ENCODE measurements at regions of chr5 and their contacts with region 1.

Region 1: GRCh38 chr5:76771705-76772405 is 47.0 kb upstream of the F2RL1 start:
- DNase-seq: no peak
- ATAC-seq: no peak

Region 2: DNA sequence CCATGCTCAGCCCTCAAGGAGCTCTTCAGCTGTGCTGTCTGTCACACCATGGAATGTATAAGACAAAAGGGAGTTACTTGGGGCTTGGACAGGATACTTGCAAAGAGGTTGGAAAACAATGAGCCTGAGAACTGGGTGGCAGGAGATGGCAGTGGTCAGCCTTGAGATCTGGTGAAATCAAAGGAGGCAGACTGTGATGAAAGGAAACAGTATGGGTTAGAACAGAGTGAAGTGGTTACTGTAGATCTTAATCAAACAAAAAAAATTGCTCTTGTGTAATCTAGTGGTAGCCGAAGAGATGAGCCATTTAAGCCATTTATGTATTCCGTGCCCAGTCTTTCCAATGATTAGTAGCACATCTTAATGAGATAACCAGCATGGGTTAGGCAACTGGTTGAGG is 546.5 kb before region 1 on chr5:
- intact Hi-C with region 1: no loop called
- DNase-seq: no peak
- ATAC-seq: no peak

Region 3: DNA sequence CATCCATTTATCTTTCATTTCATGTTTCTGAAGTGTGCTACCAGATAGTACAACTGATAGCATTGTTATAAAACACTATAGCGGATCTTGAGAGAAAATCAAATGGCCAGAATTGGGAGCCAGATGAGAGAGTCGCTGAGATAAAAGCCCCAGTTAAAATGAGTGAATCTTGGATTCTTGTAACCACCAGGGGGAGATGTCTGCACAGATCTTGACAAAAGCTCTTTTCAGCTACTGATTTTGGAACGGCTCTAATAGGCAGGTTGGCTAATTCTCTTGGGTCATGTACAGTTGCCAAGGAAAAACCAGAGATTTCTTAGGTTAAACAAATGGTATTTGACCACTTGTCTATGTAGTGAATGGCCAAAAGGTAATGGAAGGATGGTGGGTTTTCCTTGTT is 170.4 kb before region 1 on chr5:
- intact Hi-C with region 1: loop called in 1 of 2 experiments (anchors 10 kb)
- DNase-seq: no peak
- ATAC-seq: peak; percentile 69

Region 4: DNA sequence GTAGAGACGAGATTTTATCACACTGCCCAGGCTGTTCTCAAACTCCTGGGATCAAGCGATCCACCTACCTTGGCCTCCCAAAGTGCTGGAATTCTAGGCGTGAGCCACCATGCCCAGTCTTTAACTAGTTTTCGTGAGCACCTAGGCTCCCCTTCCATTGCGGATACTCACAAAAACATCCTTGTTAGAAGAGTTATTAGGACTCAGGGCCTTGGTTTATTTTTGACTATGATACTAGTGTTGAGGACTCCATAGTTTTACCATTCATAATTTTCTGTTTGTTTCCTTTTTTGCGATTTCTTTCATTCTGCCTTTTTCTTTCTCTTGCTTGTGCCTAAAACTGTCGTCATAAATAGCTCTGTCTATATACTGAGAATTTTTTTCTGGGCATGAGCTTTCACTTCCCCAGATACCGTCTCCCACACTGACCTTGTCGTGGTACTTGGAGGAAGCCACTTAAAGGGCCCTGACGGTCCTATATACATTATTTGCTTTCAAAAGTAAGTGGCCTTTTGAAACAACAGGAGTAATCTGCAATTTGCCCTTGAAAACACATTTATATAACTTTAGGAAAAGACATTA is 50.8 kb before region 1 on chr5:
- intact Hi-C with region 1: loop called in 1 of 2 experiments (anchors 10 kb)
- DNase-seq: no peak
- ATAC-seq: no peak

Measured in left colon (tissue), 2 donors.